Right ventricle myocardium superior (tissue), 1 donor: ENCODE measurements at regions of chr4 and their contacts with region 1.

Region 1: GRCh38 chr4:139083956-139084803 is 68.6 kb downstream of the NOCT start:
- DNase-seq: peak; percentile 93
- ATAC-seq: peak; percentile 80

Region 2: DNA sequence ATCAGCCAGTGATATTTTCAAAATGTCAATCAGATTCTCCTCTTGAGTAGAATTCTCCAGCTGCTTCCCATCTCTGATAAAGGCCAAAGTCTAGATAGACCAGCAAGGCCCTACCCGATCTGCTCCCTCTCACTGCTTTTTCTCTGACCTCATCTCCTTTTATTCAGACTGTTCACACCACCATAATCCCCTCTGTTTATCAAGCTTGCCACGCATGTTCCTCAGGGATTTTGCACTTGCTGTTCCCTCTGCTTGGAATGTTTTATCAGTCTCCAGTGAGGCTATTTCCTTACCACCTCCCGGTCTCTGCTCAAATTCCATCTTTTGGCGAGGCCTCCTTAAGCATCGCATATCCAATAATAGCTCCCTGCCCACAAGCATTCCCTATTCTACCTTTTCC is 48.5 kb before region 1 on chr4:
- intact Hi-C with region 1: loop called (anchors 5 kb)
- DNase-seq: no peak
- ATAC-seq: no peak

Region 3: DNA sequence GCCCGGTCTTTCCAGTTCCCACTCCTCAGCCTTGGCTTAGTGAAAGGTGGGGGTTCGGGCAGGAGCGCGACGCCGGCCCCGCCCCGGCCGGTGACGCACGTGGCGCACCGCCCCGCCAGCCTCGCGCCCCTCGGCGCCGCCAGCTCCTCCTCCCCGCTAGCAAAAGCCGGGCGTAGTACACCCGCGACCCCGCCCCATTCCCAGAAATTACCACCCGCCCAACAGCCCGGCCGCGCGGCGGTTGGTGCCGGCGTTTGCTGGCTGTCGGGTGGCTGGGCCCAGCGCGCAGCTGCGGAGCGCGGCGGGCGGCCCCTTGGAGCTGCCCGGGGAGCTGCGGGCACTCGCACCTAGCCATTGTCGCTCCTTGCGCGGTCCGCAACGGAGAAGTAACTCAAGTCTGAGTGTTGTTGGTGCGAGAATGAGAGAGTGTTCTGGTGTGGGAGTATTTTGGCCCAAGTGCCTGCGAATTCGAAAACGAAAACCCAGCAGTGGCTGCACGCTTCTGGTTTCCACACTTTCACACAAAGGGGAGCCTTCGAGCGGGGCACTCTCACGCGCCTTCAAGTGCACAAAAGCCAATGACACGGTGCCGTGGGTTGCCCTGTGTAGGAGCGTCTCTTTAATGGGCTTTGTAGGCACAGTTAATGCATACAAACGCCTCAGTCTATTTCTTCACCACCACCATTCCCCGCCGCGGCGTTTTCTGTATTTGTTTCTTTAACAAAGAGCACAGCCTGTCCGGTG is 93.9 kb after region 1 on chr4:
- intact Hi-C with region 1: loop called (anchors 5 kb)
- DNase-seq: peak; percentile 97
- ATAC-seq: peak; percentile 88

Region 4: DNA sequence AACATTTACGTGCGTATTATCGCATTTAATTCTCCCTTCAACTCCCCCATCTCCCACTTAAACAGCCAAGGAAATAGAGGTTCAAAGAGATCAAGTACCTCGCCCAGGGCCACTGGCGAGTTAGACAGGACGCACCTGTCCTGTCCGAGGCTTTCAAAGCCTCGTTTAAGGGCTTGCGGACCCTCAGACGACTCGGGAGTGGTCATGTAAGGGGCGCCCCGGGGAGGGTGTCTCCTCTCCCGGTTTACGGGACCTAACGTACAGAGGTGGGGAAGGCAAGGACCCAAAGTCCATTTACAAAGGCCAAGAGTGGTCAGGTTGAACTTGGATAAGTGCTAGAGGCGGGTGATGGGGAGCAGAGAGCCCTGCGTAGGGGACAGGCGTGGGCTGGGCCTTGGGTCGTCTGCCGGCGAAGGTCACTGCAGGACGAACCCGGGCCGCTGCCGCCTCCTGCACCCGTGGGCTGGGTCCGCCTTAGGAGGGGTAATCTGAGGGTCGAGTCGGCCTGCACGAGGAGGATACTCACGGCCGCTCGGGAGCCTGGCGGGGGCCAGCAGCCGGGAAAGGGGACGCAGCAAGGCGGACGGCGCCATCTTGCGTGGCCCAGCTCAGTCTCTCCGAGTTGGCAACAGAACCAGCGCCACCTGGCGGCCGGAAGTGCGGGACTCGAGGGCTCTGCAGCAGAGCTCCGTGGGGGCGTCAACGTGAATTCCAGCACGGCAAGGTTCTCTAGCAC is 211.2 kb after region 1 on chr4:
- intact Hi-C with region 1: loop called (anchors 5 kb)
- DNase-seq: peak; percentile 99
- ATAC-seq: peak; percentile 97